Activated naive CD4-positive, alpha-beta T cell treated with anti-CD3 and anti-CD28 coated beads for 36 hours (primary cell): ENCODE measurements at regions of chr4 and their contacts with region 1.

Region 1: DNA sequence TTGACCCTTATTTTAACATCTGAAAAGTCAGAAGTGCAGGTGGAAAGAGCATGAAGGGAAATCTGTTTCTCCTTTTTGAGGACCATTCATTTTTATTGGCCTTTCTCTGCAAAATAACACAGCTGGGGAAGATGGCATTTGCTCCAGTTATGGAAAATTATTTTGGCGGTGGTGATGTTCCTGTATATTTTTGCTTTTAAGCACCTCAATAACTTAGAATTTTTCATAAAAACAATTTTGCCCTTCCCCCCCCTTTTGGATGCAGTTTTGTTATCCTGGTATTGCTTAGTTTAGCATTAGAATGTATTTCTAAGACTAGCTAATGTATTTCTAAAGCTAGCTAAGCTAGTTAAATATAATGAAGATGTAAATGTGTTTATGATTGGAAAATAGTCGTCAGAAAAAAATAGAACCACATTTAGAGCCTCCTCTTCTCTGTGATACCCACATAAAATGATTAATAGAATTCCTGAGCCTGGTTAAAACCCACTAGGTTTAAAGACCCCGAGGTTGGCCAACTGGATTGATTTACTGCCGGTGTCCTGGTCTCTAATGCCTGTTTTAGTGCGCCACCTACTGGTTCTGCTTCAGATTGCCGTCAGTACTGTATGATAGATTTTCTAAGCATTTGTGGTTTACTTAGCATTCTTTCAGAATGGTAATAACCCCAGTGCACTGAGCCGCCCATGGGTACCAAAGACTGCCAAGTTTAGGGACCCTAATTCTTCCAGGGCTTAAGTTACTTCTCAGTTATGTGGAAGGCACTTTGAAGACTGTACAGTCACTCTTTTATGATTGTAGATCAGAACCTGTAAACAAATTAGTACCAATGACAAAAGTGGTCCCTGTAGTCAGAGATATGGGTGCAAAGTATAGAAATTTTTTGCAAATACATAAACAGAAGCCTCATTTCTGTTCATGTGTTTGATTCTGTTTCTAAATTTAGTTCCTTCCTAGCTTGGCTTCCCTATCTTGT is 11.4 kb downstream of the KLF3 start:
- DNase-seq: peak; percentile 95
- H3K4me3 Mint-ChIP-seq: peak overlapping the region; percentile 71
- H3K27ac Mint-ChIP-seq: peak overlapping the region; percentile 82
- H3K4me1 Mint-ChIP-seq: peaks cover 85% of the 10 kb centered on the region
- H3K27me3 Mint-ChIP-seq: no peaks in the 10 kb centered on the region

Region 2: DNA sequence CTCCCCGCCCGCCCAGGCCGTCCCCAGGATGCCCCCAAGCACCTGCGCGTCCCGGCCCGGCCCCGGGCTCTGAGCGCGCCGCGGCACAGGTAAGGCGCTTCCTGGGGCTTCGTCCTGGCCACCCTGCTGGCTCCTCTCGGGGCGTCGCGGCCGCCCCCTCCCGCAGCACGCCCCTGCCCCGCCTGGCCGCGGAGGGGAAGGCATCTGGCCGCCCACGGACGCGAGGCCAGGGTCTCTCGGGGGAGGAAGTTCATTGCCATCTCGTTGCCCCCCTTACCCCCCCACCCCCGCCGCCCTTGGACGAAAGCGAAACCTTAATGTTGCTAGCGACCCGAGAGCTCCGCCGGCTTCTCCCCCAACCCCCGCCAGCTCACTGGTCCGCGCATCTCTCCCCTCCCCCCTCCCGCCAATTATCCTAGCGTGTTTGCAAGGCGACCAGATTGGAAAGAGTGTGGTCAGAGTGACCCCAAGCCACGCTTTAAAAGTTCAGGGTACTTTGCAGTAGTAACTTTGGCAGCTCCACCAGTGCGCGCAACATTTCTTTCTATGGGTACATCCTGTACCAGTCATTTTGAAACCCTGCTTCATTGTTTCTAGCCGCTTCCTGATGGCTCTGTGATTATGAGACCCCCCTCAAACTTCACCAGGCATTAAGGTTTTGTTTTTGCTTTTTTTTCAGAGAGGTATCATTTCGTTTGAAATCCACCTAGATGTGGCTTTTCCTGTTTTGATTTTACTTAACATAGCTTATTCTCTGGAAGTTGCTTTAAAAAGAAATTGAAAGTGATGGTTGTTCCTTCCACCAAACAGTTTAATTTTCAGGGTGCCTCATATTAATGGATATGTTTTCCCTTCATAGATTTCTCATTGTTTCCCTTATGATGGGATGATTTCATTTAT is 783.9 kb before region 1 on chr4:
- CTCF ChIA-PET with region 1: no interaction called
- intact Hi-C with region 1: loop called (anchors 10 kb)
- DNase-seq: peak; percentile 74
- H3K4me3 Mint-ChIP-seq: peak overlapping the region; percentile 89
- H3K27ac Mint-ChIP-seq: peak overlapping the region; percentile 86
- H3K4me1 Mint-ChIP-seq: peaks cover 37% of the 10 kb centered on the region
- H3K27me3 Mint-ChIP-seq: peaks cover 8% of the 10 kb centered on the region

Region 3: GRCh38 chr4:38069271-38069760 is 606.1 kb before region 1 on chr4:
- CTCF ChIA-PET with region 1: interaction called, 13 read pairs
- intact Hi-C with region 1: loop called (anchors 1 kb)
- DNase-seq: peak; percentile 80
- H3K4me3 Mint-ChIP-seq: no peak overlapping the region
- H3K27ac Mint-ChIP-seq: no peak overlapping the region
- H3K4me1 Mint-ChIP-seq: peaks cover 17% of the 10 kb centered on the region
- H3K27me3 Mint-ChIP-seq: no peaks in the 10 kb centered on the region

Region 4: GRCh38 chr4:38319456-38320342 is 355.7 kb before region 1 on chr4:
- CTCF ChIA-PET with region 1: interaction called, 85 read pairs
- intact Hi-C with region 1: loop called (anchors 1 kb)
- DNase-seq: peak; percentile 98
- H3K4me3 Mint-ChIP-seq: peak overlapping the region; percentile 76
- H3K27ac Mint-ChIP-seq: peak overlapping the region; percentile 89
- H3K4me1 Mint-ChIP-seq: peaks cover 46% of the 10 kb centered on the region
- H3K27me3 Mint-ChIP-seq: no peaks in the 10 kb centered on the region

Region 5: DNA sequence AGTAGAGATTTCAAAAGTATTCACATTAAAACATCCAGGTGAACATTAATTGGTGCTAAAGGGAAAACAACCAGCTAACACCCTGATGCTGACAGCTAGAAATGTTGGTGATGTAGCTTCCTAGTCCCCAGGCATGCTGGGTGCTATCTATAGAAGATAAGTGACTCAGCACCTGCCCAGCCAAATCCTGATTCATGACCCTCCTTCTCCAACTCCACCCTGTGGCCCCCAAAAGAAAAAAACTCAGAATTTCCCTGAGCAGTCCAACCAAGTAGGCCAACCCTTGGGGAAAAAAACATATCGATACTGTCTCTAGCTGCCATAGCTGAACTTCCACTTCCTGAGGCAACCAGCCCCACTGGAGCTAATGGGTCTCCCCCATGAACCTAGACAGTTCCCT is 209.0 kb before region 1 on chr4:
- CTCF ChIA-PET with region 1: no interaction called
- intact Hi-C with region 1: no loop called
- DNase-seq: no peak
- H3K4me3 Mint-ChIP-seq: no peak overlapping the region
- H3K27ac Mint-ChIP-seq: no peak overlapping the region
- H3K4me1 Mint-ChIP-seq: peaks cover 9% of the 10 kb centered on the region
- H3K27me3 Mint-ChIP-seq: no peaks in the 10 kb centered on the region

Region 6: GRCh38 chr4:38663801-38664705 is 11.4 kb before region 1 on chr4 and contains the start of gene KLF3:
- CTCF ChIA-PET with region 1: interaction called, 13 read pairs
- intact Hi-C with region 1: loop called (anchors 1 kb)
- DNase-seq: peak; percentile 86
- H3K4me3 Mint-ChIP-seq: peak within 1 kb of the TSS; percentile 79
- H3K27ac Mint-ChIP-seq: peak within 1 kb of the TSS; percentile 87
- H3K4me1 Mint-ChIP-seq: peaks cover 66% of the 10 kb centered on the region
- H3K27me3 Mint-ChIP-seq: no peaks in the 10 kb centered on the region
- total RNA-seq, gene KLF3: 15.2 to 15.8 TPM

Region 7: DNA sequence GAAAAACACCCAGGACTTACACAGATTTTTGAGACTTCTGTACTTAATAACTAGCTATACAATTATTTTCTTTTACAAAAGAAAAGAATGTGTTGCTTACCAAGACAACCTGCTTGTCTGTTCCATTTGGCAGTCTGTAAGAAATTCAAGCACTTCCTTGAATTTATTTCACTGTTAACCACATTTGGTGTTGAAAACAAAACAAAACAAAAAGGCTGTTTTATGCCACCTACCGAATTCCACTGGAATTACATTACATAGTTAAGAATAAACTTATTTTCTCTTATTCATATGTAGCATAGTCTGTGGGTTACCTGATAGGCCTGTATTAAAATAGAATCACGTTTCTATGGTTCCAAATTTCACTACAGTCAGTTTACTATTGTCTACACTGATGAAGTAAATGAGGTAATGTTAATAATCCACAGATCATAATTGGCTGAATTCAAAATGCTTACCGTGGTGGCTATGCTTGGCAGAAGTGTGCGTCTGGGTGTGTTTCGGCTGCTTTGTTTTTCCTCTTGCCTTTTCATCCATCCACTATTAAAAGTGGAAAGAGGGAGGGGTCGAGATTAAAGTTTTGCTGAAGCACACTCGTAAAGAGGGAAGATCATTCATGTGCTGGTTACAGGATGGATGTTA is 129.3 kb after region 1 on chr4 and contains the start of gene TLR1:
- CTCF ChIA-PET with region 1: interaction called, 4 read pairs
- intact Hi-C with region 1: loop called (anchors 5 kb)
- DNase-seq: peak; percentile 30
- H3K4me3 Mint-ChIP-seq: peak within 1 kb of the TSS; percentile 69
- H3K27ac Mint-ChIP-seq: peak within 1 kb of the TSS; percentile 90
- H3K4me1 Mint-ChIP-seq: peaks cover 30% of the 10 kb centered on the region
- H3K27me3 Mint-ChIP-seq: no peaks in the 10 kb centered on the region
- total RNA-seq, gene TLR1: 4.0 to 4.2 TPM